MCF 10A (cell line): ENCODE measurements at regions of chr11 and their contacts with region 1.

Region 1: DNA sequence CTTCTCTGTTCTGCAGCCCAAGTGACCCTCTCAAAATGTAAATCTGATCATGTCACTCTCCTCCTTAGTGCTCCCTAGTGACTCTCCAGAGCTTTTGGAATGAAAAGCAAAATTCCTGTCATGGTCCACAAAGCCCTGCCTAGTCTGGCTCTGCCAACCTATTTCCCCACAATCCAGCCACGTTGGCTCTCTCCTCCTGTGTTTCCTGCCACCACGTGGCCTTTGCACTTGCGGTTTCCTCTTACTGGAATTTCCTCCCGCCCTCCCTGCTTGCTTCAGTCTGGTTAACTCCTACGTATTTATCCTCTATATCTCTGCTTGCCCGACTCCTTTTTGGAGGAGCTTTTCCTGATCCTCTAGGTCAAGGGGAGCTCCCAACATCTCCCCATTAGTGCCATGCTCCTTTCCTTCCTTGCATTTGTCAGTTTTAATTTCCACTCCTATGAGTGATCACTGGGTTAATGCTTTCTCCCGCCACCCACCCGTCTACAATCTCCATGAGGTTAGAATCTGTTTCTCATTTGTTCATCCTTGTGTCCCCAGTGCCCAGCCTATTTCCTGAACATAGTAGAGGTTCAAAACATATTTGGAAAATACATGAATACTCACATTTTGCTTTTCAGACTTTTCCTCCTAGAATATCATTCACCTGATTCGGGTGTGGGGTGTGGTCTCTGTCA is 11.5 kb downstream of the NNMT start:
- DNase-seq: peak; percentile 93
- H3K4me3 Mint-ChIP-seq: peak overlapping the region; percentile 70
- H3K27ac Mint-ChIP-seq: peak overlapping the region; percentile 85
- H3K4me1 Mint-ChIP-seq: peaks cover 52% of the 10 kb centered on the region
- H3K27me3 Mint-ChIP-seq: no peaks in the 10 kb centered on the region
- CTCF ChIP-seq: no peak

Region 2: DNA sequence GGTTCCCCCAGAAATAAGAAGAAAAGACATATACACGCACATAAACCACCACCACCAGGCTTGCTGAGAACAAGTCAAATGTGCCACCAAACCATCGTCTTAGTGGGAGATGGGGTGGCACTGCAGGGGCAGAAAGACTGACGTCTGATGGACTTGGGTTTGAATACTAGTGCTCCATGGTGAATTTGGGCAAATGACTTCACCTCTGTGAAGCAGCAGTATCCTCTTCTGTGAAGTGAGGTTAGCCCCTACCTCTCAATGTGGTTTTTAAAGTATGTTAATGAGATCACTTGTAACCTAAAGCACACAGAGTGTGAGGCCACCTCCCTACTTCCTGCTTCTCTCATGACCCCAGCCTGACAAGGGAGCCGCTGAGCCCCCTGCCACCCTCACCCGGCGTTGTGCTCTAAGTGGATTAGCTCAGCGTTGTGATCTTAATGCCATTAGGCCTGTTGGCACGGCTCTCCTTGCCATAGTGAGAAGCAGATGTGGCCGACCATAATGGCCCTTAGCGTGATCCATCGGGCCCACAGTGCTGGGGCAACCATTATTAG is 233.8 kb before region 1 on chr11:
- CTCF ChIA-PET with region 1: no interaction called
- POLR2A ChIA-PET with region 1: no interaction called
- intact Hi-C with region 1: no loop called
- DNase-seq: no peak
- H3K4me3 Mint-ChIP-seq: peak overlapping the region; percentile 63
- H3K27ac Mint-ChIP-seq: no peak overlapping the region
- H3K4me1 Mint-ChIP-seq: peaks cover 66% of the 10 kb centered on the region
- H3K27me3 Mint-ChIP-seq: no peaks in the 10 kb centered on the region
- CTCF ChIP-seq: no peak

Region 3: GRCh38 chr11:114295676-114296604 is 11.7 kb before region 1 on chr11 and contains the start of gene NNMT:
- CTCF ChIA-PET with region 1: interaction called, 19 read pairs
- POLR2A ChIA-PET with region 1: interaction called, 83 read pairs
- intact Hi-C with region 1: no loop called
- DNase-seq: peak; percentile 99
- H3K4me3 Mint-ChIP-seq: peak within 1 kb of the TSS; percentile 78
- H3K27ac Mint-ChIP-seq: peak within 1 kb of the TSS; percentile 98
- H3K4me1 Mint-ChIP-seq: peaks cover 37% of the 10 kb centered on the region
- H3K27me3 Mint-ChIP-seq: no peaks in the 10 kb centered on the region
- CTCF ChIP-seq: no peak
- total RNA-seq, gene NNMT: 429 and 638 TPM in 2 replicates

Region 4: DNA sequence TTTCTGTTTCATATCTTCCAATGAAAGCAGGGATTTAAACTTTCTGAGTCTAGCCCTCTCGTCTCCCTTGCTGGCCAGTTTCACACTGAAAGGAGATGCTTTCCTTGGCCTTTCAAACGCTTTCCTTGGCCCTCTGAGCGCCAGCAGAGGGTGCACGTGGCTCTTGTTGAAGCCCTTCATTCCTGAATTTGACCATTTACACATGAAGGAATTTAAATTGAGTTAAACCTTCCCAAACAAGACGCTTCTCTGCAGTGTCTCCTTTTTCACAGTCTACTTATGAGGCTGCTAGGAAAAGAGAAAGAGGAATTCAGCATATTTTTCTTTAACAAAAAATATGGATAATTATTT is 10.1 kb after region 1 on chr11:
- CTCF ChIA-PET with region 1: interaction called, 3 read pairs
- POLR2A ChIA-PET with region 1: interaction called, 10 read pairs
- intact Hi-C with region 1: no loop called
- DNase-seq: peak; percentile 59
- H3K4me3 Mint-ChIP-seq: no peak overlapping the region
- H3K27ac Mint-ChIP-seq: no peak overlapping the region
- H3K4me1 Mint-ChIP-seq: peaks cover 21% of the 10 kb centered on the region
- H3K27me3 Mint-ChIP-seq: no peaks in the 10 kb centered on the region
- CTCF ChIP-seq: peak; percentile 12

Region 5: DNA sequence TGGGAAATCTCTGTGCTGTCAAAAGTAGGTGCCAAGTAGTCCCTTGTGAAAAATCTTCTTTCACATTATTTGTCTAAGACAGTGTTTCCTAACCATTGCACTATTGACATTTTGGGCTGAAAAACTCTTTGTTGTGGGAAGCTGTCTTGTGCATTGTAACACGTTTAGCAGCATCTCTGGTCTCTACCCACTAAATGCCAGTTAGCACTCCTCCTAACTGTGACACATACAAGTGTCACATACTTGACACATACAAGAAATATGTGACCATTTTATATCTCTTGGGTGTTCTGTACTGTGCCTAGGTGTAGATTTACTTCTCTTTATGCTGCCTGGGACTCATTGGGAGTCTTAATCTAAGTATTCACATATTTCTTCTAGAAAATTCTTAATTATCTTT is 194.2 kb after region 1 on chr11:
- CTCF ChIA-PET with region 1: no interaction called
- POLR2A ChIA-PET with region 1: no interaction called
- intact Hi-C with region 1: no loop called
- DNase-seq: no peak
- H3K4me3 Mint-ChIP-seq: no peak overlapping the region
- H3K27ac Mint-ChIP-seq: no peak overlapping the region
- H3K4me1 Mint-ChIP-seq: no peaks in the 10 kb centered on the region
- H3K27me3 Mint-ChIP-seq: peaks cover 15% of the 10 kb centered on the region
- CTCF ChIP-seq: no peak